CD8-positive, alpha-beta T cell (primary cell): ENCODE measurements at regions of chr19 and their contacts with region 1.

Region 1: GRCh38 chr19:35213663-35214632 is 14.6 kb downstream of the FAM187B start:
- DNase-seq: peak; percentile 60 to 97 (median 80)
- ATAC-seq: peak; percentile 34
- H3K4me3 ChIP-seq: no peak overlapping the region
- H3K4me3 Mint-ChIP-seq: peak overlapping the region; percentile 65
- H3K27ac ChIP-seq: peak overlapping the region; percentile 96 to 97
- H3K27ac Mint-ChIP-seq: peak overlapping the region; percentile 100
- H3K4me1 ChIP-seq: peaks cover 56% of the 10 kb centered on the region
- H3K4me1 Mint-ChIP-seq: peaks cover 64% of the 10 kb centered on the region
- H3K27me3 ChIP-seq: no peaks in the 10 kb centered on the region
- H3K27me3 Mint-ChIP-seq: no peaks in the 10 kb centered on the region
- CTCF ChIP-seq: no peak

Region 2: GRCh38 chr19:35090506-35091237 is 123.3 kb before region 1 on chr19:
- CTCF ChIA-PET with region 1: no interaction called
- POLR2A ChIA-PET with region 1: no interaction called
- intact Hi-C with region 1: no loop called
- DNase-seq: peak in 7 of 9 experiments; percentile 4 to 72 (median 43)
- ATAC-seq: peak; percentile 84
- H3K4me3 ChIP-seq: no peak overlapping the region
- H3K4me3 Mint-ChIP-seq: no peak overlapping the region
- H3K27ac ChIP-seq: no peak overlapping the region
- H3K27ac Mint-ChIP-seq: no peak overlapping the region
- H3K4me1 ChIP-seq: peaks cover 16% of the 10 kb centered on the region
- H3K4me1 Mint-ChIP-seq: peaks cover 14% of the 10 kb centered on the region
- H3K27me3 ChIP-seq: peaks cover 0 to 2% of the 10 kb centered on the region in 2 experiments
- H3K27me3 Mint-ChIP-seq: peaks cover 4% of the 10 kb centered on the region
- CTCF ChIP-seq: peak; percentile 65

Region 3: GRCh38 chr19:35114353-35115176 is 99.4 kb before region 1 on chr19:
- CTCF ChIA-PET with region 1: no interaction called
- POLR2A ChIA-PET with region 1: no interaction called
- intact Hi-C with region 1: loop called in 1 of 2 experiments (anchors 1 kb)
- DNase-seq: peak; percentile 41 to 83 (median 74)
- ATAC-seq: peak; percentile 97
- H3K4me3 ChIP-seq: no peak overlapping the region
- H3K4me3 Mint-ChIP-seq: no peak overlapping the region
- H3K27ac ChIP-seq: no peak overlapping the region
- H3K27ac Mint-ChIP-seq: no peak overlapping the region
- H3K4me1 ChIP-seq: peaks cover 9% of the 10 kb centered on the region
- H3K4me1 Mint-ChIP-seq: peaks cover 5% of the 10 kb centered on the region
- H3K27me3 ChIP-seq: peaks cover 0 to 2% of the 10 kb centered on the region in 2 experiments
- H3K27me3 Mint-ChIP-seq: no peaks in the 10 kb centered on the region
- CTCF ChIP-seq: peak; percentile 92

Region 4: DNA sequence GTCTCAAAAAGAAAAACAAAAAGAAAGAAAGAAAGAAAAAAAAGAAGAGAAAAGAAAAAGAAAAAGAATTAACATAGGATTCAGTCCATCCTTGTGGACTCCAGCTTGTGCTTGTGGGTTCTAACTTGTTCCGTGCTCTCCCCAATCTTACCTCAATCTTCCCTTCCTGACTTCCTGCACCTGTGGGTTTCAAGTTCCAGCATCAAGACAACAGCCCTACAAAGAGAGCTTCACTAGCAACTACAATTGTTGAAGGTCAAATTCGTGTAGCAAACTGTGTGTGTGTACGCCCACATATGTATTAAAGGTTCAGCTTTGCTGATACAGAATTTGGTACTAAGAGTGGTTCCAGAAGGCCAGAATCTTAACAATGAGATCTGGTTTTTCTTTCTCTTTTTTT is 34.1 kb before region 1 on chr19:
- CTCF ChIA-PET with region 1: no interaction called
- POLR2A ChIA-PET with region 1: no interaction called
- intact Hi-C with region 1: no loop called
- DNase-seq: no peak
- ATAC-seq: no peak
- H3K4me3 ChIP-seq: no peak overlapping the region
- H3K4me3 Mint-ChIP-seq: peak overlapping the region; percentile 5
- H3K27ac ChIP-seq: no peak overlapping the region
- H3K27ac Mint-ChIP-seq: peak overlapping the region; percentile 24
- H3K4me1 ChIP-seq: peaks cover 19% of the 10 kb centered on the region
- H3K4me1 Mint-ChIP-seq: peaks cover 17% of the 10 kb centered on the region
- H3K27me3 ChIP-seq: no peaks in the 10 kb centered on the region
- H3K27me3 Mint-ChIP-seq: no peaks in the 10 kb centered on the region
- CTCF ChIP-seq: no peak

Region 5: GRCh38 chr19:35195830-35196229 is 18.1 kb before region 1 on chr19:
- CTCF ChIA-PET with region 1: interaction called, 5 read pairs
- POLR2A ChIA-PET with region 1: interaction called, 3 read pairs
- intact Hi-C with region 1: loop called in 1 of 2 experiments (anchors 2 kb)
- DNase-seq: no peak
- ATAC-seq: no peak
- H3K4me3 ChIP-seq: no peak overlapping the region
- H3K4me3 Mint-ChIP-seq: no peak overlapping the region
- H3K27ac ChIP-seq: no peak overlapping the region
- H3K27ac Mint-ChIP-seq: no peak overlapping the region
- H3K4me1 ChIP-seq: peaks cover 4% of the 10 kb centered on the region
- H3K4me1 Mint-ChIP-seq: peaks cover 23% of the 10 kb centered on the region
- H3K27me3 ChIP-seq: no peaks in the 10 kb centered on the region
- H3K27me3 Mint-ChIP-seq: no peaks in the 10 kb centered on the region
- CTCF ChIP-seq: no peak

Region 6: DNA sequence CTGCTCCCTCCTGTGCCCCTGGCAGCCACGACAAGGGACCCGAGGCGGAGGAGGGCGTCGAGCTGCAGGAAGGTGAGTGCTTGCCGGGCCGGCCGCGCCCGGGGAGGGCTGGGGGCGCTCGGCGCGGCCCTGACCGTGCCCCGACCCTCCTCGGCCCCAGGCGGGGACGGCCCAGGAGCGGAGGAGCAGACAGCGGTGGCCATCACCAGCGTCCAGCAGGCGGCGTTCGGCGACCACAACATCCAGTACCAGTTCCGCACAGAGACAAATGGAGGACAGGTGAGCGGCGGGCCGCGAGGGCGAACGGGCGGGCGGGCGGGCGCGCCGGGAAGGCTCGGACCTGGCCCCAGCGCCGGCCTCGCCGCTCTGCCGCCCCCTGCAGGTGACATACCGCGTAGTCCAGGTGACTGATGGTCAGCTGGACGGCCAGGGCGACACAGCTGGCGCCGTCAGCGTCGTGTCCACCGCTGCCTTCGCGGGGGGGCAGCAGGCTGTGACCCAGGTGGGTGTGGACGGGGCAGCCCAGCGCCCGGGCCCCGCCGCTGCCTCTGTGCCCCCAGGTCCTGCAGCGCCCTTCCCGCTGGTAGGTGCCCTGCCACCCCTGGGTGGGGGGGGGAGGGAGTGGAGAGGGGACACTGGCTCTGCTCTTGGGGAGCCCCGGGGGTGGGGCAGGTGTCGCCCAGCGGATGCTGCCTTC is 55.6 kb after region 1 on chr19:
- CTCF ChIA-PET with region 1: interaction called, 5 read pairs
- POLR2A ChIA-PET with region 1: interaction called, 5 read pairs
- intact Hi-C with region 1: loop called (anchors 1 to 2 kb)
- DNase-seq: peak; percentile 57 to 88 (median 78)
- ATAC-seq: peak; percentile 47
- H3K4me3 ChIP-seq: peak overlapping the region in 1 of 2 experiments; percentile 62
- H3K4me3 Mint-ChIP-seq: peak overlapping the region; percentile 75
- H3K27ac ChIP-seq: no peak overlapping the region
- H3K27ac Mint-ChIP-seq: peak overlapping the region; percentile 80
- H3K4me1 ChIP-seq: peaks cover 25% of the 10 kb centered on the region
- H3K4me1 Mint-ChIP-seq: peaks cover 45% of the 10 kb centered on the region
- H3K27me3 ChIP-seq: no peaks in the 10 kb centered on the region
- H3K27me3 Mint-ChIP-seq: no peaks in the 10 kb centered on the region
- CTCF ChIP-seq: peak; percentile 64

Region 7: GRCh38 chr19:35449053-35449687 is 235.2 kb after region 1 on chr19:
- CTCF ChIA-PET with region 1: no interaction called
- POLR2A ChIA-PET with region 1: no interaction called
- intact Hi-C with region 1: no loop called
- DNase-seq: no peak
- ATAC-seq: no peak
- H3K4me3 ChIP-seq: no peak overlapping the region
- H3K4me3 Mint-ChIP-seq: no peak overlapping the region
- H3K27ac ChIP-seq: no peak overlapping the region
- H3K27ac Mint-ChIP-seq: no peak overlapping the region
- H3K4me1 ChIP-seq: peaks cover 14% of the 10 kb centered on the region
- H3K4me1 Mint-ChIP-seq: peaks cover 42% of the 10 kb centered on the region
- H3K27me3 ChIP-seq: no peaks in the 10 kb centered on the region
- H3K27me3 Mint-ChIP-seq: peaks cover 14% of the 10 kb centered on the region
- CTCF ChIP-seq: no peak

Region 8: GRCh38 chr19:35545001-35545911 is 331.3 kb after region 1 on chr19 and contains the start of gene TMEM147:
- CTCF ChIA-PET with region 1: no interaction called
- POLR2A ChIA-PET with region 1: no interaction called
- intact Hi-C with region 1: no loop called
- DNase-seq: peak; percentile 44 to 88 (median 79)
- ATAC-seq: peak; percentile 75
- H3K4me3 ChIP-seq: peak within 1 kb of the TSS; percentile 75 to 81
- H3K4me3 Mint-ChIP-seq: peak within 1 kb of the TSS; percentile 88
- H3K27ac ChIP-seq: peak within 1 kb of the TSS; percentile 79 to 85
- H3K27ac Mint-ChIP-seq: peak within 1 kb of the TSS; percentile 90
- H3K4me1 ChIP-seq: peaks cover 21% of the 10 kb centered on the region
- H3K4me1 Mint-ChIP-seq: peaks cover 35% of the 10 kb centered on the region
- H3K27me3 ChIP-seq: no peaks in the 10 kb centered on the region
- H3K27me3 Mint-ChIP-seq: no peaks in the 10 kb centered on the region
- CTCF ChIP-seq: no peak
- total RNA-seq, gene TMEM147: 22.3 to 27.2 TPM